ENCODE measurements at regions of chr6 and their contacts with region 1.

Region 1: GRCh38 chr6:13355043-13355951 is 27.0 kb upstream of the TBC1D7 start:
- DNase-seq: peak; percentile 70
- H3K4me3 Mint-ChIP-seq: peak overlapping the region; percentile 63
- H3K27ac Mint-ChIP-seq: peak overlapping the region; percentile 99
- H3K4me1 Mint-ChIP-seq: peaks cover 45% of the 10 kb centered on the region
- H3K27me3 Mint-ChIP-seq: no peaks in the 10 kb centered on the region

Region 2: GRCh38 chr6:11366183-11366933 is 1988.9 kb before region 1 on chr6:
- CTCF ChIA-PET with region 1: no interaction called
- intact Hi-C with region 1: loop called (anchors 10 kb)
- DNase-seq: peak; percentile 75
- H3K4me3 Mint-ChIP-seq: peak overlapping the region; percentile 29
- H3K27ac Mint-ChIP-seq: peak overlapping the region; percentile 67
- H3K4me1 Mint-ChIP-seq: peaks cover 96% of the 10 kb centered on the region
- H3K27me3 Mint-ChIP-seq: no peaks in the 10 kb centered on the region

Region 3: DNA sequence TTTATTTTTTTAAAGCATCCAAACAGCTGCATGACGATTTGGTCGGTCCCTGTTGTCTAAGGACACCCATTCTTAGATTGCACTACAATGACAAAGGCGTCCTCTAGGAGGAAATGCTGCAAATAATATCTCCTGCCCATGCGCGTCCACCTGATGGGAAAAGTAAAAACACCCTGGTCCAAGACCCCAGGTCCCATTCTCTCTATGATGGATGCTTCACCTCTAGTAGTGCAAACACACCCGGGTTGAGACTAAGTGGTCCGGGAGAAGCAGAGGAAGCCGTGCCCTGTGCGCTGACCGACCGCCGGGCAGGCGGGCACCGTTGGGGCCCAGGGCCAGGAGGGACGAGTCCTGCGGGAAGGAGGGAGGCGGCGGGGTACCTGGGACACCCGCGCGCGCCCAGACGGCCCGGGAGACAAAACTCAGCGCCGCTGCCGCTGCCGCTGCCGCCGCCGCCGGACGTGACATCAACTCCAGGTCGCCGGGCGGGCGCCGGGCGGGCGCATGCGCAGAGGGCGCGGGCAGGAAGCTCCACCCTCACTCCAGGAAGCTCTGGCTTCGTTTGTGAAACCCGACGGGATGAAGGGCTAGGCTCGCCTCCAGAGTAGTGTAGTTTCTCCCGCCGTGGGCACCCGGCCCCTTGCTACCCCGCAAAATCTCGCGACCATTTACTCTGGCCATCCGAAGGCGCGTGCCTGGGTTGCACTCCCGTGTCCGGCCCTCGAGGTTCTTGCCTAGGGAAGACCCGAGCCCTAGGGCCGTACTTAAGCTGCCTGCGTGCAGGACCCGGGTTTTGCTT is 27.0 kb before region 1 on chr6 and contains the start of gene TBC1D7:
- CTCF ChIA-PET with region 1: interaction called, 6 read pairs
- intact Hi-C with region 1: loop called (anchors 1 kb)
- DNase-seq: peak; percentile 94
- H3K4me3 Mint-ChIP-seq: peak within 1 kb of the TSS; percentile 95
- H3K27ac Mint-ChIP-seq: peak within 1 kb of the TSS; percentile 93
- H3K4me1 Mint-ChIP-seq: peaks cover 18% of the 10 kb centered on the region
- H3K27me3 Mint-ChIP-seq: no peaks in the 10 kb centered on the region
- total RNA-seq, gene TBC1D7: 25.4 to 27.1 TPM

Region 4: GRCh38 chr6:13427801-13428582 is 72.7 kb after region 1 on chr6:
- CTCF ChIA-PET with region 1: interaction called, 10 read pairs
- intact Hi-C with region 1: loop called (anchors 1 kb)
- DNase-seq: peak; percentile 90
- H3K4me3 Mint-ChIP-seq: peak overlapping the region; percentile 53
- H3K27ac Mint-ChIP-seq: peak overlapping the region; percentile 85
- H3K4me1 Mint-ChIP-seq: peaks cover 68% of the 10 kb centered on the region
- H3K27me3 Mint-ChIP-seq: no peaks in the 10 kb centered on the region

Region 5: DNA sequence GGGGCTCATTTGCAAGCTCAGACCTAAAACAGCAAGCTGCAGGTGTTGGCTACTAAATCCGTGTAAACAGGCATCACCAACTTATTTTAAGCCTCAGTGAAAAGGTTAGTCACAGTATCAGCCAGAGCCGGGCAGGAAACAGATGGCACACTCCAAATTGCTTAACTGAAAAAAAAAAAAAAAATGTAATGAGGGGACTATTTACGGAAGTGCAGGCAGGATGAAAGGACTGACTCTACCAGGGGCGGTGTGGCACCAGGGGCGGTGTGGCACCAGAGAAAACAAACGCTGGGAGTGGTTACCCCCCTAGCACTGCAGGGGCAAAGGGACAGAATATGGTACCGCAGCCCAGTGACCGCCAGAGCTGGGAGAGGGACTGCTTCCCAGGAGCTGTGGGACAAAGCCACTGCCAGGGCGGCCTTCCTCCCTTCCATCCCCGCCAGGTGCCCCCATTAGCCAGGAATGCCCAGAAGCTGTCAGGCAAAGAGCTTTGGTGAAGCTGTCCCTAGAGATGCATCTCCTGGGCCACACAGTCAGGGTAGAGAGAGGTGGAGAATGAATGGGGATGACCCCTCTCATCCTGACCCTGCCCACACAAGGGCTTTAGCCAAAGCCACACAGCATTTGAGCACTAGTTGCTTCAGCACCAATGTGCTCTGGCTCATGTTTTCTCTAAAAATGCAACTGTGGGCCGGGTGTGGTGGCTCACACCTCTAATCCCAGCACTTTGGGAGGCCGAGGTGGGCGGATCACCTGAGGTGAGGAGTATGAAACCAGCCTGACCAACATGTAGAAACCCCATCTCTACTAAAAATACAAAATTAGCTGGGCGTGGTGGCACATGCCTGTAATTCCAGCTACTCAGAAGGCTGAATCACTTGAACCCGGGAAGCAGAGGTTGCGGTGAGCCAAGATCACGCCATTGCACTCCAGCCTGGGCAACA is 171.7 kb after region 1 on chr6:
- CTCF ChIA-PET with region 1: no interaction called
- intact Hi-C with region 1: loop called (anchors 1 kb)
- DNase-seq: peak; percentile 60
- H3K4me3 Mint-ChIP-seq: no peak overlapping the region
- H3K27ac Mint-ChIP-seq: no peak overlapping the region
- H3K4me1 Mint-ChIP-seq: peaks cover 11% of the 10 kb centered on the region
- H3K27me3 Mint-ChIP-seq: no peaks in the 10 kb centered on the region

Region 6: DNA sequence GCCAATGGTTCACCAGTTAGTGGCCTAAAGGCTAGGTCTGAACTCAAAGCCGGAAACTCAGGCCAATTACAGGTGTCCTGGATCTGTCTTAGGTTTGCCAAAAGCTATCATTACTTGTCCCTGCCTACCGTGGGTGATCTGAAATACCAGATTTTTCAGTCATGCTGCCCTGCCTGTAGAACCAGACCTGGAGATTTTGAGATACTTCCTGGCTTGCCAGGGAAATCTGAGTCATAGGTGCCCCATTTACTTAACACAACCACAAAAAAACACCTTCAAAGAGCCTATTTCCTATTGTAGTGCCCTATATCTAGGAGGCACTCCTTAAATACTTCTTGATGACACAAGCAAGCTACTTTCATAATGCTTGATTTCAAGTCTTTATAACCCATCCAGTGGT is 370.3 kb after region 1 on chr6:
- CTCF ChIA-PET with region 1: no interaction called
- intact Hi-C with region 1: loop called (anchors 1 kb)
- DNase-seq: peak; percentile 62
- H3K4me3 Mint-ChIP-seq: no peak overlapping the region
- H3K27ac Mint-ChIP-seq: peak overlapping the region; percentile 80
- H3K4me1 Mint-ChIP-seq: peaks cover 38% of the 10 kb centered on the region
- H3K27me3 Mint-ChIP-seq: no peaks in the 10 kb centered on the region

Region 7: DNA sequence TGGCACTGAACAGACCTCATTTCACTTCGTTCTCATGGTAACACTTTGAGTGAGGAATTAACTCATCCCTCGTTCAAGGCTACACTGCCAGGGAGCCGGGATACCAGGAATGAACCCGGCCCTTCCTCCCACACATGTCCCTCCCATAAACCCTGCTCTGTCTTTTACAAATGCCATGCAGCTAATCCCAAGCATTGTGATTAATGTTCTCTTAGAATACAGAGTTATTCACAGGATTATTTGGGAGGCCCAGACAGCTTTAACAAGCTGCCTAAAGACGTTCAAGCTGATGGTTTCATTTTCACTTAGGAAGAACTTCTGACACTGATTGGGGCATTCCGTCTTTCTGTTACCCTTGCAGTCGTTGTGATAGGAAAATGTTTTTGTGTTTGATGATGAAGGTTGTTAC is 719.8 kb after region 1 on chr6:
- CTCF ChIA-PET with region 1: no interaction called
- intact Hi-C with region 1: loop called (anchors 5 kb)
- DNase-seq: peak; percentile 29
- H3K4me3 Mint-ChIP-seq: peak overlapping the region; percentile 46
- H3K27ac Mint-ChIP-seq: peak overlapping the region; percentile 73
- H3K4me1 Mint-ChIP-seq: peaks cover 53% of the 10 kb centered on the region
- H3K27me3 Mint-ChIP-seq: no peaks in the 10 kb centered on the region